Lower leg skin (tissue), 4 donors: ENCODE measurements at regions of chr1 and their contacts with region 1.

Region 1: GRCh38 chr1:111762332-111762731 is 6.6 kb downstream of the DDX20 start:
- DNase-seq: no peak
- H3K4me3 ChIP-seq: no peak overlapping the region
- CTCF ChIP-seq: no peak
- POLR2A ChIP-seq: no peak

Region 2: DNA sequence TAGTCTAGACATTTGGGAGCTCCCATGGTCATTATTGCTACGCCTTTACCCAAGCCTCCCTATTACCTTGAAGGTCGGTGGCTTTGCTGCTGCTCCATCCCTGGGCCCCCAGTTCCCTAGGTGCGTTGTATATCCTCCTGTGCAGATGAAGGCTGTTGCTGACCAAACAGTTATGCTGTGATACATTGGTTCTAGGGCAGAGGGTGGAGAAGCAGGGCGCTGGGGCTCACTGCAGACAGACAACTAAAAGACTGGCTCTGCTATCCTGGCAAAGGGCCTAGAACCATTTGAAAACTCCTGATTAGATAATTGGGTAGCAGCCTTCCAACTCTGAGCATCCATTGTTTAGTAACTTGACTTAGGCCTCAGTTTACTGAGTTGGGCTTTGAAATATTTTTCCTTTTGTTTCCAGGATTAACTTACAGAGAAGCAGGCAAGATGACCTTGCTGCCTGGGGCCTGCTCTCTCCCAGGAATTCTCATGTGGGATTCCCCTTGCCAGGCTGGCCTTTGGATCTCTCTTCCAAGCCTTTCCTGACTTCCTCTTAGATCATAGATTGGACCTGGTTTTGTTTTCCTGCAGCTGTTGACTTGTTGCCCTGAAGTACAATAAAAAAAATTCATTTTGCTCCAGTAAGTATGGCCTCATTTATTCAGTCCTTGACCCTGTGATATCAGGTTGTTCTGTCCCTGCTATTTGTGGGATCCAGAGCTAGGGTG is 519.4 kb before region 1 on chr1:
- intact Hi-C with region 1: loop called (anchors 5 kb)
- DNase-seq: no peak
- H3K4me3 ChIP-seq: no peak overlapping the region
- CTCF ChIP-seq: no peak
- POLR2A ChIP-seq: no peak

Region 3: DNA sequence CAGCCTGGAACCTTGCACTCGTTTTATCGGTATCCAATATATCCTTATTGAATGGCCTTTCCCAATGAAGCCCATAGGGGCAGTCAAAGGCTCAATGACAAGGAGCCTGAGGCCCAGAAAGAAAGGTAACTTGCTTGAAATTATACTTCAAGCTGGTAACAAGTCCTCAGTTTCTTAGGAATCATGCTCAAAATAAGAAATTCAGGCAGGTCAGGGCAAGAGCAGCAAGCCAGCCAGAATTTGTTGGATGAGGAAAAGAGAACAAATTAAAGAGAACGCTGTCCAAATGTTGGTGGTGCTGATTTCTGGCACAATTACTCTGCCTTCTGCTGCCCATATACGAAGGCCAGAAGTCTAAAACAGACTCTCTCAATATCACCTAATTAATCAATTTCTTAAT is 71.0 kb after region 1 on chr1:
- intact Hi-C with region 1: no loop called
- DNase-seq: no peak
- H3K4me3 ChIP-seq: no peak overlapping the region
- CTCF ChIP-seq: no peak
- POLR2A ChIP-seq: no peak